Adrenal gland (tissue), 19 donors: ENCODE measurements at regions of chr16 and their contacts with region 1.

Region 1: DNA sequence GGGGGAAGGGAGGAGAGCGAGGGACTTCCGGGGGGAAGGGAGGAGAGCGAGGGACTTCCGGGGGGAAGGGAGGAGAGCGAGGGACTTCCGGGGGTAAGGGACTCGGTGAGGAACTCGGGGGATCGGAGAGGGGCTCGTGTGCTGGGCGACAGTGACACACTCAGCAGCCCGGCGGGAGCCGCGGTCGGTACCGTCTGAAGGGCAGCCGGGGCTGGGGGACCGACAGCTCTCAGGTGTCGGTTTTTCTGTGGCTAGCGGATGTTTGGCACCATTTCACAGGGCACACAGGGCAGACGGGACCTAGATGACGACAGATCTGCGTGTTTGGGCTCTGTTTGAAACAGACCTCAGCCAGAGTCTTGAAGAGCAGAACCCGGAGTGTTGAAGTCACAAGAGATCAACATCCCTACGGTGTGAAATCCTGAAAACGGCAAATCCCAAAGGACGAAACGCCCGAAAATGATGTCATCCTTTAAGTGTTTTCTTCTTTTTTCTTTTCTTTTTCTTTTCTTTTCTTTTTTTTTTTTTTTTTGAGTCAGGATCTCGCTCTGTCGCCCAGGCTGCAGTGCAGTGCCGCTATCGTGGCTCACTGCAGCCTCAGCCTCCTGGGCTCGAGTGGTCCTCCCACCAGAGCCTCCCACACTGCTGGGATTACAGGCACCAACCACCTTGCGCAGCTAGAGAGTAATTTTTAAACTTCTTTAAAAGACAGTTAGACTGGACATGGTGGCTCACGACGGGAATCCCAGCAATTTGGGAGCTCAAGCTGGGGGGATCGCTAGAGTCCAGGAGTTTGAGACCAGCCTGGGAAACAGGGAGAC is 23.9 kb downstream of the ZNF778 start:
- DNase-seq: peak; percentile 71 to 86 (median 77)
- H3K4me3 ChIP-seq: peak overlapping the region; percentile 37 to 65 (median 62)
- H3K27ac ChIP-seq: peak overlapping the region; percentile 93 to 98 (median 96)
- H3K4me1 ChIP-seq: peaks cover 4 to 5% of the 10 kb centered on the region in 2 donors
- H3K27me3 ChIP-seq: no peaks in the 10 kb centered on the region
- CTCF ChIP-seq: no peak
- POLR2A ChIP-seq: peak; percentile 88 to 93

Region 2: DNA sequence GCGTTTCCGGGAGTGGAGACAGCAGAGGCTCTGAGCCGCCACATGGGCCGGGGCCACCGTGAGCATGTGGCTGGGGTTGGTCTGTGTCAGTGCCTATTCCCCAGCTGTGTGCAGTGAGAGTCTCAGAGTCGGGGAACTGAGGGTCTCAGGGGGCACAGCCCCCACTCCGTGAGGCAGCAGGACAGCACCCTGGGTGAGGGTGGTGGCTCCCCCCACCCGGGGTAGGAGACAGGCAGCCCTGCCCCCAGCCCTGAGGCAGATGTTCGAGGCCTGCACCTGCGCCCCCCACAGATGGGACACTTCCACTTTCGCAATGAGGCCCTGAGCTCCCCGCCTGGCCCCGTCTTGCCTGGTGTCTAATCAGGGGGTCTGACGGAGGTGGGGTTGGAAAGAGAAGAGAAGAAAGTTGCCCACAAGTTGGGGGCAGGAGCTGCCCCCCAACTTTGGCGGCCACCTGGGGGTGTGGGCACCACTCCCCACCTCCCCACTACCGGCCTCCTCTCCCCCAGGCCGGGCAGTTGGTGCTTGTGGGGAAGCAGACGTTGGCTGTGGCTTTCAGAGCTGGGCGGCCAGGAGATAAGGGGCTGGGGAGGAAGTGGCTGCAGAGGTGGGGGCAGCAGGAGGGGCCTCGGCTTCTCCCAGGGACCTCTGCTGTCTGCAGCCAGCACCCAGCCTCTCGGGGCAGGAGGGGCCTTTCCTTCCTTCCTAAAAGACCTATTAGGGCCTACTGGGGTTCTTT is 262.6 kb before region 1 on chr16:
- intact Hi-C with region 1: no loop called
- DNase-seq: no peak
- H3K4me3 ChIP-seq: no peak overlapping the region
- H3K27ac ChIP-seq: no peak overlapping the region
- H3K4me1 ChIP-seq: peaks cover 0 to 5% of the 10 kb centered on the region in 2 donors
- H3K27me3 ChIP-seq: peaks cover 3% of the 10 kb centered on the region
- CTCF ChIP-seq: no peak
- POLR2A ChIP-seq: no peak

Region 3: GRCh38 chr16:89289428-89290395 is 48.3 kb after region 1 on chr16:
- intact Hi-C with region 1: loop called in 1 of 2 experiments (anchors 5 kb)
- DNase-seq: peak; percentile 76 to 88 (median 82)
- H3K4me3 ChIP-seq: no peak overlapping the region
- H3K27ac ChIP-seq: peak overlapping the region in 1 of 5 donors; percentile 0
- H3K4me1 ChIP-seq: no peaks in the 10 kb centered on the region
- H3K27me3 ChIP-seq: no peaks in the 10 kb centered on the region
- CTCF ChIP-seq: peak; percentile 66 to 87 (median 76)
- POLR2A ChIP-seq: no peak